Ovary (tissue), 10 donors: ENCODE measurements at regions of chr5 and their contacts with region 1.

Region 1: DNA sequence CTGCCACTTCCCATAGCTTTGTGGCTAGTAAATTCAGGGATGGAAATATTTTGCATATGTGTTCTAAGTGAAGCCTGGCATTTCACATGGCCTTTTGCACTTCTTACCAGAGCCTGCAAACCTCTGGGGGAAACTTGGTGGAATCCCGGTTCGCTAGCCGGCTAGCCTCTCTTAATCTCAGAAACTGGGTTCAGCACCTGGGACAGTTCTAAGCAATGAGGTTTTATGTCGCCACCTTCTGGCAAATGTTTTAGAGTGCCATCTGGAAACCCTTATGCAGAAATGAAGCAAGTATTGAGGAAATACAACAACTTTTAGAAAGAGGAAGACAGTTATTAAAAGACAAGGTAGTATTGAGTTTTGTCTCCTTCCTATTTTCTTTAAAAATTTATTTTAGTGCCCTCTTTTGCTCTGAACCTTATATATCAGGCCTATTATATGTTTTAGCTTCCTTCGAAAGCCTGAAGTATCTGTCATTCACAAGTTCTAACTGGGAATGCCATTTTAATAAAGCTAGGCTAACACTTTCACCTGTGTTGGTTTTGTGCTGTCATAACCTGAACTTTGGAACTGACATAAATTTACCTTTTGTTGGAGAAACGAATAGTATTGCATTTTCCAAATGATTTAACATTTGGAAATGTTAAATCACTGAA is 963 bp upstream of the HTR1A start:
- DNase-seq: peak; percentile 39 to 46 (median 41)
- H3K4me3 ChIP-seq: no peak overlapping the region
- H3K27ac ChIP-seq: no peak overlapping the region
- H3K4me1 ChIP-seq: peaks cover 9% of the 10 kb centered on the region
- H3K27me3 ChIP-seq: no peaks in the 10 kb centered on the region
- CTCF ChIP-seq: peak; percentile 25 to 42 (median 39)
- EP300 ChIP-seq: no peak
- POLR2A ChIP-seq: no peak

Region 2: GRCh38 chr5:62448528-62448927 is 1514.7 kb before region 1 on chr5:
- intact Hi-C with region 1: loop called in 1 of 4 experiments (anchors 5 kb)
- DNase-seq: no peak
- H3K4me3 ChIP-seq: no peak overlapping the region
- H3K27ac ChIP-seq: no peak overlapping the region
- H3K4me1 ChIP-seq: no peaks in the 10 kb centered on the region
- H3K27me3 ChIP-seq: no peaks in the 10 kb centered on the region
- CTCF ChIP-seq: no peak
- EP300 ChIP-seq: no peak
- POLR2A ChIP-seq: no peak

Region 3: GRCh38 chr5:62460578-62460983 is 1502.6 kb before region 1 on chr5:
- intact Hi-C with region 1: loop called in 2 of 4 experiments (anchors 5 kb)
- DNase-seq: no peak
- H3K4me3 ChIP-seq: no peak overlapping the region
- H3K27ac ChIP-seq: peak overlapping the region in 1 of 2 donors; percentile 9
- H3K4me1 ChIP-seq: peaks cover 4% of the 10 kb centered on the region
- H3K27me3 ChIP-seq: no peaks in the 10 kb centered on the region
- CTCF ChIP-seq: peak; percentile 48 to 72 (median 65)
- EP300 ChIP-seq: no peak
- POLR2A ChIP-seq: no peak

Region 4: DNA sequence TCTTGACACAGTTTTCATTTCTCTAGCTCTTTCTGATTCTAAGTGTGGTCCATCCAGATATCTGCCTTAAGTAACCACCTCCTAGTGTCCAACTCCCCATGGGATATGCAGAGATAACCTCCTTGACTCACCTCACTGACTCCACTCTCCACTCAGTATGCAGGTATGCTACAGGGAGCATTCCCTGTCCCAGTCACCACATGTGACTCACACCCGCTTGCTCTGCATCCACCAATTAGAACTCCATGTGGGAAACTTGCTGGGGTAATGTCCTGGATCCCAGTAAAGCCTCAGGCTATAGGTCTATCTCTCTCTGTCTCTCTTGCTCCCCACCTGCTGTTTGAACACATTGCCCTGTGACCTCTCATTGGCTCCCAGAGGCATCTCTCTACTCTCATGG is 564.9 kb before region 1 on chr5:
- intact Hi-C with region 1: loop called in 1 of 4 experiments (anchors 10 kb)
- DNase-seq: no peak
- H3K4me3 ChIP-seq: no peak overlapping the region
- H3K27ac ChIP-seq: no peak overlapping the region
- H3K4me1 ChIP-seq: no peaks in the 10 kb centered on the region
- H3K27me3 ChIP-seq: no peaks in the 10 kb centered on the region
- CTCF ChIP-seq: no peak
- EP300 ChIP-seq: no peak
- POLR2A ChIP-seq: no peak